ENCODE measurements at regions of chr21 and their contacts with region 1.

Region 1: DNA sequence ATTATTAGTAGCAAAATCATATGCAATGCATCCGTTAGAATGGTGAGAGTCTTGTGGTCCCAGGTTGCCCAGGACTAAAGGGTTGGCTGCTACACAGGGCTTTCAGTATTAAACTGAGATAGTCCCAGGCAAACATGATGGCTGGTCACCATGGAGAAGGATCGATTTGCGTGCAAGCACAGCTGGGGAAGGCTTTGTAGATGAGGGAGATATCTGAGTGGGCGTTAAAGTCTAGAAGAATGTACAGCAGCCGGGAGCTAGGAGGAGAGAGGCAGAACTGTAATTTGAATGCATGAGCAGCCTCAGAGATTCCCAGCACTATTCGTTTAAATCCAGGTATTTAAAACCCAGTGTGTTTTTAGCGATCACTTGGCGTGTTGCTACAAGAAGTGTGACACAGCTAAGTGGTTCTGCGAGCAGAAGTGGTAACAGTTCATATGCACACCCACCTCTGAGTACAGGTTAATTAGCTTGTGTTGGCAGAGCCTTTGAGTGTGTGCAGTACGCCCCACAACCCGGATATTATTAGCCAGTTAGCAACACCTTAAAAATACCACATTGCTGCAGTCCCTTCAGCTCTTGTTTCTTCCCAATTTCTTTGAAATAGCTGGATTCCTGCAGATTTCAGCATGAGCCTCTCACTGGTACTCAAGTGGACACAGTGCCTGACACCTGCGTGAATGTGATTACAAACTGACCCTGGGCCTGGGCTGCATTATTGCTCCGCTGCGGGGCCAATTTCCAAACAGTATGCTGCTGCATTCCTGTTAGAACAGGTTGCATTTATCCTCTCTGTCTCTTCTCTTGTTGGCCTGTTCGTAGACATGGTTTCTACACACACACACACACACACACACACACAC is 67.2 kb upstream of the SCAF4 start:
- DNase-seq: no peak
- H3K4me3 ChIP-seq: no peak overlapping the region
- H3K27ac ChIP-seq: no peak overlapping the region
- H3K27me3 ChIP-seq: no peaks in the 10 kb centered on the region
- CTCF ChIP-seq: no peak

Region 2: DNA sequence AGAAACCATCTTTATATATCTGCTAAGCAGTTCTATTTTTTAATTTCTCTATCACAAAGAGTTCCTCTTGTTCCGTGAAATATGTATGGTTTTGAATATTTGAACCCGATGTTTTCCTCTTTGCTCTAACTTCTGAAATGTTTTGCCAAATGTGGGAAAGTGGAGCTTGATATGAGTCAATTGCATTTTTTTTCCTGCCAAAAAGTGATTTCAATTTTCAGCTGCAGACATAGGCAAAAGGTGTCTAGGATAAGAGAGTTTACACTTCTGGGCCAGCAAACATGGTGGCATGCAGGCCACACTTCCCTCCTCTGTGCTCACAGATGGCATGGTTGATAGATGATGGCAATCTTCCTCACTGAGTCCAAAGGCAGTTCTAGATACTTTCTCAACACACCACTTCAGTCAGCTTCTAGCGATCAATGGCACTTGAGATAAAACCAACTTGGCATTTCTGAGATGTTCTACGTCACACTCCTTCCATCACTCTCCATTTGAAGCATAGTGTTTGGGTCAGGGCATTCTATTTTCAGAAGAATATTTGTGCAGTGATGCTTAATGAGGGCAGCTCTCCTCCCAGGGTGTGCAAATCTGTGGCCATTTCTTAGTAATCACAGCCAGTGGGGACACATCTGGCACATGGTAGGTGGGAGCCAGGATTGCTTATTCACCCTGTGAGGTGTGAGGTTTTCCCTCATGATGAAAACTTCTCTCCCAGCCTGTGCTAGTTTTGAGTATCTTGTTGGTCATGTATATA is 12.7 kb before region 1 on chr21:
- CTCF ChIA-PET with region 1: interaction called, 11 read pairs
- POLR2A ChIA-PET with region 1: no interaction called
- DNase-seq: no peak
- H3K4me3 ChIP-seq: no peak overlapping the region
- H3K27ac ChIP-seq: no peak overlapping the region
- H3K27me3 ChIP-seq: no peaks in the 10 kb centered on the region
- CTCF ChIP-seq: no peak

Region 3: GRCh38 chr21:31846690-31847089 is 47.6 kb after region 1 on chr21:
- CTCF ChIA-PET with region 1: no interaction called
- POLR2A ChIA-PET with region 1: no interaction called
- DNase-seq: no peak
- H3K4me3 ChIP-seq: no peak overlapping the region
- H3K27ac ChIP-seq: no peak overlapping the region
- H3K27me3 ChIP-seq: no peaks in the 10 kb centered on the region
- CTCF ChIP-seq: no peak

Region 4: DNA sequence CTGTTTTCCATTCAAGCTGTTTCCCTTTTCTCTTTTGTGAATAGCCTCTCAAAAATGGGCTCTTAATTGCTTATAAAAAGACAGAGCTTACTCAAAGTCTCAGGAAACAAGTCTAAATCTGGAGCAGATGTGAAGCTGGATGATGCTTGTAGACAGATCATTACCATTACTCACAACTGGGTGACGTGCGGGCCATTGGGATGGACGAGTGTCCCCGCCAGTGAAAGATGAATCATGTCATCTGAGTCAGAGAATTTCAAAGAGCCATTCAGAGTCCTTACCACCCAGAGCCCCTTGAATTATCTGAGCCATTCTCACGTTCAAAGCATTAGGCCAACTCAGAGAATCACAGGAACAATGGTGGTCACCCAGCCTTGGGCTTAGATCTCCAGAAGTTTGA is 208.4 kb after region 1 on chr21:
- CTCF ChIA-PET with region 1: no interaction called
- POLR2A ChIA-PET with region 1: no interaction called
- DNase-seq: no peak
- H3K4me3 ChIP-seq: no peak overlapping the region
- H3K27ac ChIP-seq: no peak overlapping the region
- H3K27me3 ChIP-seq: no peaks in the 10 kb centered on the region
- CTCF ChIP-seq: no peak